Mammary epithelial cell (primary cell): ENCODE measurements at regions of chr2 and their contacts with region 1.

Region 1: DNA sequence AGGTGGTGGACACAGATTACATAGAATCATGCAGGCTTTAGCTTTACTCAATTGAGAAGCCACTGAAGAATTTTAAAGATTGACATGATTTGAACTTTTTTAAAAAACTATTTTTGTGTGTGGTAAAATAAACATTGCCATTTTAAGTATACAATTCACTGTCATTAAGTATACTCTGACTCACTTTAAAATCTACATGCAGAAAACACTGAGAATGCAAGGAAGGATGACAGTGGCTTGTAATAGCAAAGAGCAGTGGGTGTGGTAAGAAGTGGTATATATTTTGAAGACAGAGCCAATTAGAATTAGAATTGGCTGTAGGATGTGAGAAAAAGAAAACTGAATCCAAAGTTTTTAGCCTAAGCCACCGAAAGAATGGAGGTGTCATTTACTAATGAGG is 14.9 kb downstream of the TRMT61B start:
- DNase-seq: no peak
- H3K4me3 ChIP-seq: no peak overlapping the region
- H3K27ac ChIP-seq: no peak overlapping the region
- H3K4me1 ChIP-seq: no peaks in the 10 kb centered on the region
- H3K27me3 ChIP-seq: no peaks in the 10 kb centered on the region
- CTCF ChIP-seq: no peak

Region 2: DNA sequence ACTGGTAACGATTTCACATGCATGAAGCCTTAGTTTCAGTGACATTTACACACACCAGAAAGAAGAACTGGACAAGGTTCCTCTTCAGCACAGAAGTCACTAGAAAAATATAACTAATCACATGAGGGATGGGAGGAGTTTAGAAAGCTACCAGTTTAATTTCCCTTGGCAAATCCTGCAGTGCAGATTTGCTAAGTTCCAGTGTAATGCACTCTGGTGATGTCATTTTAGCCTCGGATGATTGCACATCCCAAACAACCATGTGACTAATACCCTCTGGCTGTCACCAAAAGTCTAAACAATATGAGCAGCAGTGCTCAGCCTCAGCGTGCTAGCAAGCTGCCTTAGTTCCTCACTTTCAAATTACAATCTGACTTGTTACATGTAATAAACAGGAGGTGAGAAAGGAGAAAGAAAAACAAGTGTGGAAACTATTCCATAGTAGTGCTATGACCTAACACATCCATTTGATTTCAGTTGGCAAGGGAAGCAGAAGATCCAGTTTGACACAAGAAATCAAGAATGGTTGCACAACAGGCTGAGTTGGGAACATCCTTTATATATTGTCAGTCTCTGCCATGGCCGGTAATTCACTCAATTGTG is 138.8 kb before region 1 on chr2:
- CTCF ChIA-PET with region 1: no interaction called
- dilution Hi-C with region 1: no loop called
- in situ Hi-C with region 1: no loop called
- intact Hi-C with region 1: no loop called
- DNase-seq: peak; percentile 95
- H3K4me3 ChIP-seq: peak overlapping the region in 1 of 3 experiments; percentile 0
- H3K27ac ChIP-seq: peak overlapping the region; percentile 64
- H3K4me1 ChIP-seq: peaks cover 31% of the 10 kb centered on the region
- H3K27me3 ChIP-seq: no peaks in the 10 kb centered on the region
- CTCF ChIP-seq: no peak

Region 3: GRCh38 chr2:28909655-28910353 is 54.6 kb after region 1 on chr2:
- CTCF ChIA-PET with region 1: no interaction called
- dilution Hi-C with region 1: loop called (anchors 5 kb)
- in situ Hi-C with region 1: no loop called
- intact Hi-C with region 1: no loop called
- DNase-seq: no peak
- H3K4me3 ChIP-seq: no peak overlapping the region
- H3K27ac ChIP-seq: no peak overlapping the region
- H3K4me1 ChIP-seq: no peaks in the 10 kb centered on the region
- H3K27me3 ChIP-seq: no peaks in the 10 kb centered on the region
- CTCF ChIP-seq: no peak